PC-3 (cell line): ENCODE measurements at regions of chr18 and their contacts with region 1.

Region 1: GRCh38 chr18:2223849-2224248 is 347.5 kb downstream of the METTL4 start:
- DNase-seq: peak; percentile 70
- ATAC-seq: peak; percentile 73
- H3K4me3 ChIP-seq: no peak overlapping the region
- H3K27ac ChIP-seq: no peak overlapping the region
- H3K4me1 ChIP-seq: peaks cover 11% of the 10 kb centered on the region
- H3K27me3 ChIP-seq: no peaks in the 10 kb centered on the region
- CTCF ChIP-seq: peak; percentile 83

Region 2: GRCh38 chr18:864872-865273 is 1359.0 kb before region 1 on chr18:
- CTCF ChIA-PET with region 1: no interaction called
- POLR2A ChIA-PET with region 1: no interaction called
- intact Hi-C with region 1: loop called (anchors 5 kb)
- DNase-seq: peak; percentile 86
- ATAC-seq: peak; percentile 99
- H3K4me3 ChIP-seq: no peak overlapping the region
- H3K27ac ChIP-seq: no peak overlapping the region
- H3K4me1 ChIP-seq: no peaks in the 10 kb centered on the region
- H3K27me3 ChIP-seq: peaks cover 24% of the 10 kb centered on the region; the same call in 1 of the 2 replicates
- CTCF ChIP-seq: peak; percentile 99

Region 3: DNA sequence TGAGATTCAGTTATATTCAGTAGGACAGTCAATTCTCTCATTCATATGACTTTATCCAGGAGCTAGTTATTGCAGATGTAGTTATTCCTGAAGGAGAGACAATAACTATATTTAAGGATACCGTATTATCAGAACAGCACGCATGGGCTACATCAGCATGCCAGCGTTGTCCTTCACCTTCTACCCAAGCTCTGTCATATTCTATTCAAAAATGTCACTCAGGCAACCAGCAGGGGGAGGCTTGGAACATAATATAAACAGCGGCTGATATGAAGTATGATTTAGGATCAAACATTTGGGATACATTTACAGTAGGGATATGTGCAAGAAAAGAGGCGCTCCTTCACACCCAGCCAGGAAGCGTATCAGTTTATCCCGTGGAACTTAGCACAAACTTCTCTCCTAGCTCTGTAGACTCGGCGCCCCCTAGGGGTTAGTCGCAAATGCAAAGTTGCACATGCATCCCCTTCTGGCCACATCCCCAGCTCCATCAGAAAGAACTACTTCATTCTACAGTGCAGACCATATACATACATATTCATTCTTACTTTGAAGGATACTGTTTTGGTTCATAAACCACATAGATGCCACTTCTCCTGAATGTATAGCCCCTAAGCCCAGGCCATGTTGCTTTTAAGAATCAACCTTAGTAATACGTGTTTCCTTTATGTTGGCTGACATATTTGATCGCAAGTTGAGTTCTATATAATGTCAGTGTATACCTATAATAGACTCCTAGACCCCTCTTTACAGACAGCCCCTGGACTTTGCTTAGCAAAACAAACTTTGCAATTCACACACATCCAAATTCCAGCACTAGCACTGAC is 559.8 kb before region 1 on chr18:
- CTCF ChIA-PET with region 1: no interaction called
- POLR2A ChIA-PET with region 1: no interaction called
- intact Hi-C with region 1: loop called (anchors 10 kb)
- DNase-seq: peak; percentile 69
- ATAC-seq: peak; percentile 77
- H3K4me3 ChIP-seq: no peak overlapping the region
- H3K27ac ChIP-seq: no peak overlapping the region
- H3K4me1 ChIP-seq: no peaks in the 10 kb centered on the region
- H3K27me3 ChIP-seq: peaks cover 25% of the 10 kb centered on the region
- CTCF ChIP-seq: peak; percentile 98

Region 4: GRCh38 chr18:2070619-2071018 is 153.2 kb before region 1 on chr18:
- CTCF ChIA-PET with region 1: no interaction called
- POLR2A ChIA-PET with region 1: no interaction called
- intact Hi-C with region 1: no loop called
- DNase-seq: no peak
- ATAC-seq: no peak
- H3K4me3 ChIP-seq: no peak overlapping the region
- H3K27ac ChIP-seq: no peak overlapping the region
- H3K4me1 ChIP-seq: no peaks in the 10 kb centered on the region
- H3K27me3 ChIP-seq: no peaks in the 10 kb centered on the region; the same call in 1 of the 2 replicates
- CTCF ChIP-seq: no peak

Region 5: DNA sequence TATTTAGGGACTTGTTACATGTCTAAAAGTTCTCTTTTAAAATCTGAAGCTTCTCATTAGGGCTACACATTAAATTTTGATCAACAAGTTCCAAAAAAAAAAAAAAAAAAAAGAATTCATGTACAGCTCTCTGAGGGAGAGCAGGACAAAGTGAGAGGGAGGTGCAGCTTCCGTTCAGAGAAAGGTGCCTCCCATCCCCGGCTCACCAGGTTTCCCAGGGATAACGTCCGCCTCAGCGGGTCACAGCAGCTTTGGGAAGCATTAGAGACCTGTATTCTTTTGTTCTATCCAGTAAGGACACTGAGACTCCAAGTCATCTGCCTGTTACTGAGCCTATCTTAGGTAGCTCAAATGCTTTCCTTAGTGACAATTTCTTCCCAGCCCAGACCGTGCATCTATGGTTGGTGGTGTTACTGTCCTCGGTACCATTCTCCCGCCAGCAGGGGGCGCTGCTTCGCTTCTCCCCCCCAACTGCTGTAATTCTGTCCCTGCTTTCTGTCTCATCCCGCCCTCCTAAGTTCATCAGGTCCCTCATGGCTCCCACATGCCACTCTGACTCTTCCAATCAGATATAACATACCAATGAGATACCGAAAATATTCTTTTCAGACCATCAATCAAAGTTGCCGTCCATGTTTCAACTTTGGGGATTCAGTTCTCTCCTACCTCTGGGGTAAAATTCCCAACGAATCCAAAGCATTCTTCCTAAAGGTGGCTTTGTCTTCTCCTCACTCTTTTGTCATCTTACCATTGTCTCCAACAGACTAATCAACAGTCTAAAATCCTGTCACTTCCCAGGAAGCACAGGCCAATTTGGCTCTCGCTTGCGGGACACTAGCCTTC is 119.0 kb before region 1 on chr18:
- CTCF ChIA-PET with region 1: interaction called, 6 read pairs
- POLR2A ChIA-PET with region 1: interaction called, 3 read pairs
- intact Hi-C with region 1: loop called (anchors 1 kb)
- DNase-seq: peak; percentile 64
- ATAC-seq: peak; percentile 94
- H3K4me3 ChIP-seq: no peak overlapping the region
- H3K27ac ChIP-seq: no peak overlapping the region
- H3K4me1 ChIP-seq: 0 out of 2 replicates have a peak, but pooled peaks cover 7% of the 10 kb centered on the region
- H3K27me3 ChIP-seq: no peaks in the 10 kb centered on the region
- CTCF ChIP-seq: peak; percentile 95

Region 6: GRCh38 chr18:2180586-2180985 is 43.3 kb before region 1 on chr18:
- CTCF ChIA-PET with region 1: no interaction called
- POLR2A ChIA-PET with region 1: no interaction called
- intact Hi-C with region 1: loop called (anchors 2 kb)
- DNase-seq: no peak
- ATAC-seq: no peak
- H3K4me3 ChIP-seq: no peak overlapping the region
- H3K27ac ChIP-seq: no peak overlapping the region
- H3K4me1 ChIP-seq: no peaks in the 10 kb centered on the region
- H3K27me3 ChIP-seq: no peaks in the 10 kb centered on the region
- CTCF ChIP-seq: no peak

Region 7: GRCh38 chr18:2736823-2737222 is 513.0 kb after region 1 on chr18:
- CTCF ChIA-PET with region 1: no interaction called
- POLR2A ChIA-PET with region 1: no interaction called
- intact Hi-C with region 1: no loop called
- DNase-seq: no peak
- ATAC-seq: no peak
- H3K4me3 ChIP-seq: no peak overlapping the region
- H3K27ac ChIP-seq: no peak overlapping the region
- H3K4me1 ChIP-seq: no peaks in the 10 kb centered on the region
- H3K27me3 ChIP-seq: no peaks in the 10 kb centered on the region
- CTCF ChIP-seq: no peak